ENCODE measurements at regions of chrX and their contacts with region 1.

Region 1: DNA sequence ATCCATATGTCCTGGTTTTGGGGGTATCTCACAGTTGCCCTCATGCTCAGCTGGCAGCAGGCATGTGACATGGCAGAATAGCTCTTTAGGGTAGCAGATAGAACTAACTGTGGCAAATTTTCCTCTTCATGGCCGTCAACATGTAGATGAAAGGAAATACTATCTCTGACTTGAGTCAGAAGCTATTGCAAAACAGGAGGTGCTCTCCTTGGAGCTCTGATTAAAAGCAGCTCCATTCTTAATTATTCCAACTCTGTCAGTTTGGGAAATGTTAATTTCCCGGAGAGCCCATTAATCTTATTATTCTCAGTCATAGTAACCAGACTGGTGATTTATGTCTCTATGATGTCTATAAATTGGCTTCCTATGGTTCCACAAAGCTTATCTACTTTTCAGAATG is 18.2 kb downstream of the IL13RA1 start:
- DNase-seq: no peak
- ATAC-seq: no peak
- H3K4me3 ChIP-seq: no peak overlapping the region
- H3K4me3 Mint-ChIP-seq: no peak overlapping the region
- H3K27ac ChIP-seq: no peak overlapping the region
- H3K27ac Mint-ChIP-seq: no peak overlapping the region
- H3K4me1 ChIP-seq: no peaks in the 10 kb centered on the region
- H3K4me1 Mint-ChIP-seq: no peaks in the 10 kb centered on the region
- H3K27me3 ChIP-seq: peaks cover 0 to 2% of the 10 kb centered on the region in 2 experiments
- H3K27me3 Mint-ChIP-seq: peaks cover 2 to 27% of the 10 kb centered on the region in 2 donors

Region 2: DNA sequence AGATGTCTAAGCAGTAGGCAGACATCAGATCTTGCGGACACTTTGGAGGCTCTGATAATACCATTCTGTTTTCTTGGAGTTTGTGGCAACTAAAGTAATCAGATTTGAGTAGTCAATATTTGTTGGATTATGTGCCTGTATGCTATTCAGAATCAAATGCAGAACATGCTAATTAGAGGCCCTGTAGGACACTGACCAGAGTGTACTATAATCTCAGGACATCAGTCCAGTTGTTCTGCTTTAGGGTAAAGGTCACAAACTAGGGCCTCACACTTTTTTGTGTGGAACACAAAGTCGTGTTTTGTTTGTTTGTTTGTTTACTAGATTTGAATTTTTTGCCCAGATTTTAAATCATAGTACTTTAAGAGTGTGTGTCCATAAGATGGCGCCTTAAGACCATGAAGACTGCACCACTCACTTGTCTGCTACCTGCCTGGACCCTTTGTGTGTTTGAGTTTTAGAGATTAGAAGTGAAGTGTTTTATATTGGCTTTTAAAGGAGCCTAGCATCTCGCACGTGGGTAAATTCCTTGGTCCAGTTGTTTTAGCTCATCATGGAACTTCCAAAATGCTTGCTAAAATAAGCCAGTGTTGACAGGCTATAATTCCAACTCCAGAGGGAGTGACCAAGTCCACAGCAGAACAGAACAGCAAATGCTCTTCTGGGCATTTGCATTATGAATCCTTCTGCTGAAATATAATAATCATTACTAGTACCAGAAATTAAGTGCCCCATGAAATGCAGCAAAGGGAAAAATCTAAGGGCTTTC is 16.6 kb after region 1 on chrX:
- CTCF ChIA-PET with region 1: no interaction called
- POLR2A ChIA-PET with region 1: no interaction called
- DNase-seq: peak in 1 of 35 experiments; percentile 1
- ATAC-seq: no peak
- H3K4me3 ChIP-seq: no peak overlapping the region
- H3K4me3 Mint-ChIP-seq: no peak overlapping the region
- H3K27ac ChIP-seq: no peak overlapping the region
- H3K27ac Mint-ChIP-seq: no peak overlapping the region
- H3K4me1 ChIP-seq: no peaks in the 10 kb centered on the region
- H3K4me1 Mint-ChIP-seq: no peaks in the 10 kb centered on the region
- H3K27me3 ChIP-seq: no peaks in the 10 kb centered on the region
- H3K27me3 Mint-ChIP-seq: peaks cover 0 to 13% of the 10 kb centered on the region in 2 donors

Region 3: DNA sequence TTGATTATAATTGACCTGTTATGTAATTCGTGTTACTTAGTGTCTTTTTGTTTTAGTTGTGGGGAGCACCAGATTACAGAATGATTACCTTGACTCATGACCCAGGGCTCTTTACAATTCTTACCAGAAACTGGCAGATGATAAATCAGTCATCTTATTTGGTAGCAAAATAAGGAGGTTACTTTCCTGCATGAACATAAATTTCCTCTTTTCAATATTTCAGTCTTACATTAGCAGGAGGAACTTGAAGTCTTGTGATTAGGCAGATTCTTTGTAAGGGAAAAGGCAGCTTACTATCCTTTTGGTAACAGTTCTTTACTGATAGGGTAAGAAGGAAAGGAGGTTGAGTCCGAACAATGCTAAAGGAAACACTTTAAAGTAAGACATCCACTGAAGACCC is 696.7 kb after region 1 on chrX:
- CTCF ChIA-PET with region 1: no interaction called
- POLR2A ChIA-PET with region 1: interaction called in 1 of 2 experiments, 12 read pairs
- DNase-seq: no peak
- ATAC-seq: no peak
- H3K4me3 ChIP-seq: no peak overlapping the region
- H3K4me3 Mint-ChIP-seq: no peak overlapping the region
- H3K27ac ChIP-seq: no peak overlapping the region
- H3K27ac Mint-ChIP-seq: no peak overlapping the region
- H3K4me1 ChIP-seq: no peaks in the 10 kb centered on the region
- H3K4me1 Mint-ChIP-seq: no peaks in the 10 kb centered on the region
- H3K27me3 ChIP-seq: no peaks in the 10 kb centered on the region
- H3K27me3 Mint-ChIP-seq: peaks cover 0 to 6% of the 10 kb centered on the region in 2 donors